MCF 10A (cell line): ENCODE measurements at regions of chrX and their contacts with region 1.

Region 1: DNA sequence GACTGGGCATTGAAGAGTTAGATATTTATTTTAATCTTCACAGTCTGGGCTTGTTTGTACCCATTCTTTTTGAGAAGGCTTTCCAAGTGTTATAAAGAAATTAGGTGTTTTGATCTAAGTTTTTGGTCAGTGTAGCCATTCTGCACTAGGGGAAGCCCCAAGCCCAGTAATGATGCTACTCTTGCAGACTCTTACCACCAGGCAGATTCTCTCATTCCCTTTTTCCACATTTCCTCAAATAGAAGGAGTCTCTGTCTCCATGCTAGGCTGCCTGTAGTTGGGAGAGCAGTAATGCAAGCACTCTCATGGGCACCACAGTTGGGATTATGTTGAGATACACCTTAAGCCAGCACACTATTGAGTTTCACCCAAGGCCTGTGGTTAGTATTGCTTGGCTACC is 21.5 kb downstream of the CDX4 start:
- DNase-seq: no peak
- H3K4me3 Mint-ChIP-seq: no peak overlapping the region
- H3K27ac Mint-ChIP-seq: no peak overlapping the region
- H3K4me1 Mint-ChIP-seq: no peaks in the 10 kb centered on the region
- H3K27me3 Mint-ChIP-seq: peaks cover 92% of the 10 kb centered on the region
- CTCF ChIP-seq: no peak

Region 2: GRCh38 chrX:73847945-73848344 is 379.6 kb after region 1 on chrX:
- CTCF ChIA-PET with region 1: no interaction called
- POLR2A ChIA-PET with region 1: no interaction called
- intact Hi-C with region 1: loop called (anchors 5 kb)
- DNase-seq: no peak
- H3K4me3 Mint-ChIP-seq: peak overlapping the region; percentile 91
- H3K27ac Mint-ChIP-seq: no peak overlapping the region
- H3K4me1 Mint-ChIP-seq: peaks cover 32% of the 10 kb centered on the region
- H3K27me3 Mint-ChIP-seq: no peaks in the 10 kb centered on the region
- CTCF ChIP-seq: no peak

Region 3: DNA sequence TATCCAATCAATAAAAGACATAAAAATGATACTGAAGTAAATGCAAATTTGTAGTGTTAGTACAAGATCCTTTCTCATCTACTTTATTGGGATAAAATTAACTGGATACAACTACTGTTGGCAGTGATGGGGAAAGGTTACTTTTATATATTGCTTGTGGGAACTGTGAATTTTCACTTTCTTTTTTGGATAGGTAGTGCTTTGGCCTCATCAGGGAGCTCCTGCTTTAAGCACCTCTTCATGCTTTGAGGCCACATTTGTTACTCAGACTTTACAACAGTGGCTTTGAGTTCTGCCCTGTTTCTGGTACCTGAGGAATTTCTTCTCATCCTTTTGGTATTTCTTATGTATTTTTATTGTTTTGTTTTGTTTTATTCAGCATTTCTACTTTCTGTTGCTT is 518.8 kb after region 1 on chrX:
- CTCF ChIA-PET with region 1: no interaction called
- POLR2A ChIA-PET with region 1: no interaction called
- intact Hi-C with region 1: no loop called
- DNase-seq: no peak
- H3K4me3 Mint-ChIP-seq: no peak overlapping the region
- H3K27ac Mint-ChIP-seq: no peak overlapping the region
- H3K4me1 Mint-ChIP-seq: no peaks in the 10 kb centered on the region
- H3K27me3 Mint-ChIP-seq: no peaks in the 10 kb centered on the region
- CTCF ChIP-seq: no peak